Head of caudate nucleus (tissue), 42 donors: ENCODE measurements at regions of chr18 and their contacts with region 1.

Region 1: DNA sequence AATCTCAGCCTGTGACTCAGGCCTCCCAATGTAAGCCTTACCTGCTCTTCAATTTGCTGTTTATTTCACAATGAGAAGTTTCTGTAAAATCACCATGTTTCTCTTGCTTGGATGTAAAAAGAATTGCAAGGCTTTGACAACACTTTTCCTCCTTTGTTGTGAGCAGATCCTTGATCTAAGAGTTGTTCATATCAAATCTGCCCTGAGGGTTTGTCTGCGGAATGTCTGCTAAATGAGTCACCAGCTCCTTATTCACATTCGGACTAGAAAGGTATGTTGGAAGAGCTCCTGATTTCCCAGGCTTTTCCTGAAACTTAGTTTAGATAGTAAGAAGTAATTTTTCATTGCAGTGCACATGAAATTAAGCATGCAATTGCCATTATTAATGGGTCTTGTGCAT is 268.2 kb upstream of the TCF4 start:
- DNase-seq: no peak

Region 2: DNA sequence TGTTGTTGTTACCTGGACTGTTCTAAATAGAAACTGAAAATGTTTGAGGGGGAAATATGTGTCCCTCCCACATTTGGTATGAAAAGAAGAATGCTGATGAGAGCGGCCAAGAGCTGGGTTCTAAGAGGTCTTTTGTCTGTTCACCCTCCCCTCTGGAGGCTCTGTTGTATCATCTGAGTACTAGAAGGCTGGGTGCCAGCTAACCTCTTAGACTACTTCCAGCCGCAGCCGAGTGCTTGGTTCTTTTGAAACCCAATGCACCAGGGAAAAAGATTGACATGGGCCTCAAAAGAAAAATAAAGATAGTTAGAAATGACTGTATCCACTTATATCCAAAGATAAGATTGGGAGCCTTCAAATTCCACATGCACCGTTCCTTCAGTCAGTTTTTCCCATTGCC is 526.3 kb after region 1 on chr18:
- intact Hi-C with region 1: loop called (anchors 10 kb)
- DNase-seq: peak; percentile 10 to 92 (median 71)